B cell (primary cell): ENCODE measurements at regions of chr15 and their contacts with region 1.

Region 1: DNA sequence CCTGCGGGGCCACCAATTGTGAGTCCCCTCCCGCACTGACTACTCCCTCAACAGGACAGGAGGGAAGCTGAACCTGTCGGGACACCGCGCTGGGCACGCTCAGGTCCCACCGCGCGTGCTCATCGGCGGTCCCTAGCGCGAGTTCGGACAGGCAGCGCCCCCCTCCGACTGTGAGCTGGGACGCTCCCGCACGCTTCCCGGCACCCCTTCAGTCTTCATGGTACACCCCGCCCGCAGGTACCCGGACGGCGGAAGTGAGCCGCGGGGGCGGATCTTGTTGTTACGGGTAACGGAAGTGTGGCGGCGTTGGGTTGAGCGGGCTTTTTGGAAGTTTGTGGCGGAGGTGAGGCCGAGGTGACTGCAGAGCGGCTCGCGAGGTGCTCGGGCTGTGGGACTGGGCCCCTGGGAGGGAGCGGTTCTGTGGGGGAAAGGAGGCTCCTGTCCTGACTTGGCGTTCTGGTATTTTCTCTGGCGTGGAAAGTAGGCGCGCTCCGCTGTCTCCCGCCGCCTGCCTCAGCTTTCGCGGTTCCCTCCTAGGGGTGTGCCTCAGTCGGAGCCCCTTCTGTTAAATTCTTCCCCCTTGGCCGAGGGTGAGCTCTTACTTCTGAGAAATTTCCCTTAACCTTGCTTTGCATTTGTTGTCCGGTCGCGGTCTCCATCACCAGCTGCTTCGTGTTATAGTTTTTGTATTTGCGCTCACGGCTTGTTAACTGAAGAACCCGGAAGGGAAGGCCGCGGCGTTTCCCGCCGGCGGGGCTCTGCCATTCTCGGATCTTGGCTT is at the start of gene FANCI:
- DNase-seq: peak; percentile 94
- ATAC-seq: peak; percentile 96
- H3K4me3 ChIP-seq: peak within 1 kb of the TSS; percentile 62 to 92 (median 76)
- H3K4me3 Mint-ChIP-seq: peak within 1 kb of the TSS; percentile 97
- H3K27ac ChIP-seq: peak within 1 kb of the TSS in 1 of 2 donors; percentile 30
- H3K27ac Mint-ChIP-seq: peak within 1 kb of the TSS; percentile 81
- H3K4me1 ChIP-seq: peaks cover 10 to 17% of the 10 kb centered on the region in 2 donors
- H3K4me1 Mint-ChIP-seq: peaks cover 31% of the 10 kb centered on the region
- H3K27me3 ChIP-seq: no peaks in the 10 kb centered on the region
- H3K27me3 Mint-ChIP-seq: no peaks in the 10 kb centered on the region
- CTCF ChIP-seq: peak; percentile 16
- total RNA-seq, gene FANCI: 14.2 and 15.8 TPM in 2 replicates

Region 2: DNA sequence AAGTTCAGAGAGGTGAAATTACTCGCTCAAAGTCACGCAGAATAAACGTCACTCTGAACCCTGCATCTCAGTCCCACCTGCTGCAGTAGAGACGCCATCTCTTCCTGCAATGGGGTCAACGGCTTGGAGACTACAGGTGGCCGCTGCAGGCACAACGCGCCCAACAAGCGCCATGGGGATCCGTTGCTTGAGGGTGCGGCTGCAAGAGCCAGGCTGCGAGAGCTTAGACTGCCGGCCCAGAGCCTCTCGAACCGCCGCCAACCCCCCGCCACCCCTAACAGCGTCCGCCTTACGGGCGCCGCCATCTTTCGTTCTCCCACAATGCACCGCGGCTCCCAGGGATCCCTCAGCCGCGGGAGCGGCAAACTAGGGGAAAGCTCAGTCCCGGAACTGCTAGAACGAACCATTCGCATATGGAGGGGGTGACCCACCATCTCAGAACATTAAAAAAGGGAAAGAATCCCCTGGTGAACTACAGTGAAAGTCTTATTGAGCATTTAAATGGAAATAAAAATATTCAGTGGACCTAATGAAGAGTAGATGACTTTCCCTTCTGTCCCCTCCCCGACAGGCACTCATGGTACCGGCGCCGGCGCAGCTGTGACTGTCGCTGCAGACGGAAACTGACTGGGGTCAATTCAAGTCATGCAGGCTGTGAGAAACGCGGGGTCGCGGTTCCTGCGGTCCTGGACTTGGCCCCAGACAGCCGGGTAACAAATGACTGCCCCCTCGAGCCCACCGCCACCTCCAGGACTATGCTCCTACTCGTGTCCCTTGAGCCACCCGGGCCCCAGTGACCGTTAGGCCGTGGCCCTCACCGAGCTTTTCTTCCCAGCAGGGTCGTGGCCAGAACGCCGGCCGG is 776.6 kb before region 1 on chr15 and contains the starts of genes MRPL46 and MRPS11:
- CTCF ChIA-PET with region 1: no interaction called
- POLR2A ChIA-PET with region 1: no interaction called
- intact Hi-C with region 1: loop called (anchors 10 kb)
- DNase-seq: peak; percentile 95
- ATAC-seq: peak; percentile 92
- H3K4me3 ChIP-seq: peak within 1 kb of the TSS; percentile 77 to 99 (median 87)
- H3K4me3 Mint-ChIP-seq: peak within 1 kb of the TSS; percentile 97
- H3K27ac ChIP-seq: peak within 1 kb of the TSS; percentile 67 to 96
- H3K27ac Mint-ChIP-seq: peak within 1 kb of the TSS; percentile 99
- H3K4me1 ChIP-seq: peaks cover 14 to 17% of the 10 kb centered on the region in 2 donors
- H3K4me1 Mint-ChIP-seq: peaks cover 26% of the 10 kb centered on the region
- H3K27me3 ChIP-seq: no peaks in the 10 kb centered on the region
- H3K27me3 Mint-ChIP-seq: no peaks in the 10 kb centered on the region
- CTCF ChIP-seq: no peak
- total RNA-seq, gene MRPL46: 22.6 and 24.6 TPM in 2 replicates
- total RNA-seq, gene MRPS11: 37.9 and 40.1 TPM in 2 replicates

Region 3: DNA sequence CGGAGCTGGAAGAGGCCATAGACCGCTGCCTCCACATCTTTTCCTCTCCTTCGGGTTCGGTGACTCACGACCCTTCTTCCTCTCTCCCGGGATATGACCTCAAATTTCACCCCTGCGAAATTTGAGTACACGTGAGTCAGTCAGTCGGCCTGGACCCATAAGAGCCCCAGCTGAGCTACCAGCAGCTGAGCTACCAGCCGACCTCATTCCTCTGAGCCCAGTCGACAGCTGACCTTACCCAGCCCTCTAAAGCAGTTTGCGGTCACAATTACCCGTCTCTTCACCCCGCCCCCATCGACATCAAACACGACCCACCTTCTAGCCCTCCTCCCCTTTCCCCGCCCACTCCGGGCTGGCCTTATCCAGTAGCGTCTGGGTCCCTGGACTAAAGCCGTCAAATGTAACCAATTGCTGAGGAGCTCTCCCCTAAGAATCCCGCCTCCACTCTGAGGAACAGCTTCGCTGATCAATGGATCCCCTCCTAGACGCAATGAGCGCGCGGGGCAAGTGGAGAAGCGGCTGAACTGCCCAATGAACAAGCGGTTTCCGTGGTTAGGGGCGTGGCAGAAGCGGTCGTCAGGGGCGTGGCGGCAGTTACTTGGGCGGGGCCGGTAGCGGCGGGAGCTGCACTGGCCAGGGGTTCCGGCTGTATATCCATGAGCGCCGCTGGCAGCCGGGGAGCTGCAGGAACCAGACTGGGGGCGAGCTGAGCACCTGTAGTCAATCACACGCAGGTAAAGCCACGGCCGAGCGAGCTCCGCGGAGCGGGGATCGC is 155.9 kb before region 1 on chr15 and contains the start of gene ABHD2:
- CTCF ChIA-PET with region 1: no interaction called
- POLR2A ChIA-PET with region 1: no interaction called
- intact Hi-C with region 1: loop called (anchors 10 kb)
- DNase-seq: peak; percentile 98
- ATAC-seq: peak; percentile 96
- H3K4me3 ChIP-seq: peak within 1 kb of the TSS; percentile 75 to 97 (median 93)
- H3K4me3 Mint-ChIP-seq: no peak within 1 kb of the TSS
- H3K27ac ChIP-seq: peak within 1 kb of the TSS; percentile 42 to 68
- H3K27ac Mint-ChIP-seq: no peak within 1 kb of the TSS
- H3K4me1 ChIP-seq: peaks cover 35 to 42% of the 10 kb centered on the region in 2 donors
- H3K4me1 Mint-ChIP-seq: peaks cover 30% of the 10 kb centered on the region
- H3K27me3 ChIP-seq: no peaks in the 10 kb centered on the region
- H3K27me3 Mint-ChIP-seq: no peaks in the 10 kb centered on the region
- CTCF ChIP-seq: no peak
- total RNA-seq, gene ABHD2: 40.9 and 45.8 TPM in 2 replicates

Region 4: GRCh38 chr15:89165677-89166076 is 78.2 kb before region 1 on chr15:
- CTCF ChIA-PET with region 1: no interaction called
- POLR2A ChIA-PET with region 1: no interaction called
- intact Hi-C with region 1: no loop called
- DNase-seq: no peak
- ATAC-seq: no peak
- H3K4me3 ChIP-seq: no peak overlapping the region
- H3K4me3 Mint-ChIP-seq: no peak overlapping the region
- H3K27ac ChIP-seq: no peak overlapping the region
- H3K27ac Mint-ChIP-seq: no peak overlapping the region
- H3K4me1 ChIP-seq: no peaks in the 10 kb centered on the region
- H3K4me1 Mint-ChIP-seq: peaks cover 4% of the 10 kb centered on the region
- H3K27me3 ChIP-seq: no peaks in the 10 kb centered on the region
- H3K27me3 Mint-ChIP-seq: no peaks in the 10 kb centered on the region
- CTCF ChIP-seq: no peak

Region 5: GRCh38 chr15:89206908-89207331 is 37.0 kb before region 1 on chr15:
- CTCF ChIA-PET with region 1: interaction called, 12 read pairs
- POLR2A ChIA-PET with region 1: no interaction called
- intact Hi-C with region 1: no loop called
- DNase-seq: peak; percentile 71
- ATAC-seq: peak; percentile 90
- H3K4me3 ChIP-seq: no peak overlapping the region
- H3K4me3 Mint-ChIP-seq: no peak overlapping the region
- H3K27ac ChIP-seq: no peak overlapping the region
- H3K27ac Mint-ChIP-seq: no peak overlapping the region
- H3K4me1 ChIP-seq: peaks cover 3% of the 10 kb centered on the region in 2 donors
- H3K4me1 Mint-ChIP-seq: peaks cover 9% of the 10 kb centered on the region
- H3K27me3 ChIP-seq: no peaks in the 10 kb centered on the region
- H3K27me3 Mint-ChIP-seq: peaks cover 4% of the 10 kb centered on the region
- CTCF ChIP-seq: peak; percentile 100

Region 6: GRCh38 chr15:89334510-89335288 is 90.8 kb after region 1 on chr15 and contains the start of gene POLG:
- CTCF ChIA-PET with region 1: no interaction called
- POLR2A ChIA-PET with region 1: interaction called, 4 read pairs
- intact Hi-C with region 1: loop called (anchors 1 kb)
- DNase-seq: peak; percentile 100
- ATAC-seq: peak; percentile 92
- H3K4me3 ChIP-seq: peak within 1 kb of the TSS; percentile 58 to 92 (median 82)
- H3K4me3 Mint-ChIP-seq: peak within 1 kb of the TSS; percentile 97
- H3K27ac ChIP-seq: peak within 1 kb of the TSS; percentile 55 to 90
- H3K27ac Mint-ChIP-seq: peak within 1 kb of the TSS; percentile 99
- H3K4me1 ChIP-seq: peaks cover 26 to 54% of the 10 kb centered on the region in 2 donors
- H3K4me1 Mint-ChIP-seq: peaks cover 47% of the 10 kb centered on the region
- H3K27me3 ChIP-seq: no peaks in the 10 kb centered on the region
- H3K27me3 Mint-ChIP-seq: peaks cover 4% of the 10 kb centered on the region
- CTCF ChIP-seq: no peak
- total RNA-seq, gene POLG: 144 and 151 TPM in 2 replicates

Region 7: DNA sequence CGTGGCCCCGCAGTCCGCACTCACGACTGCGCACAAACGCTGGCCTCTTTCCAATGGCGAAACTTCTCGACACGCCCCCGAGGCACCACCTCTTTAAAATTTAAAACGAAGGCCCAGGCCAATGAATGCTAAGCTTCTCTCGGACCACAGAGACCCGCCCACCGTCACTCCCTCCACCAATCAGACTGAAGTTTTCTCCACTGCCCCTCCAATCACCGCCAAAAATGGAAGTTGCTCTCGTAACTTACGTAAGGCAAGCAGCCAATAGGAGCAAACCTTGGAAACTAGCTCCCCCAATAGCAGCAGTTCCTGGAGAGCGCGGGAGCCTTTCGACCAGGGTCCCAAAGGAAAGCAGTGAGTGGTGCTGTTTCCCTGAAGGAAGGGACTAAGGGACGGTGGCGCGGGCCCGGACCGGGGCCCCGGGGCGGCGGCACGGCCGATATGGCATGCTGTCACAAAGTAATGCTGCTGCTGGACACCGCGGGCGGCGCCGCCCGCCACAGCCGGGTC is 331.3 kb after region 1 on chr15 and contains the start of gene TICRR:
- CTCF ChIA-PET with region 1: no interaction called
- POLR2A ChIA-PET with region 1: no interaction called
- intact Hi-C with region 1: loop called (anchors 10 kb)
- DNase-seq: peak; percentile 98
- ATAC-seq: peak; percentile 97
- H3K4me3 ChIP-seq: peak within 1 kb of the TSS; percentile 69 to 91 (median 86)
- H3K4me3 Mint-ChIP-seq: peak within 1 kb of the TSS; percentile 82
- H3K27ac ChIP-seq: no peak within 1 kb of the TSS
- H3K27ac Mint-ChIP-seq: peak within 1 kb of the TSS; percentile 57
- H3K4me1 ChIP-seq: peaks cover 6 to 15% of the 10 kb centered on the region in 2 donors
- H3K4me1 Mint-ChIP-seq: peaks cover 11% of the 10 kb centered on the region
- H3K27me3 ChIP-seq: peaks cover 0 to 5% (median 0%) of the 10 kb centered on the region in 4 experiments
- H3K27me3 Mint-ChIP-seq: peaks cover 16% of the 10 kb centered on the region
- CTCF ChIP-seq: no peak
- total RNA-seq, gene TICRR: 0.05 TPM in 1 of 2 replicates, not detected in the other